ACHN (cell line): ENCODE measurements at regions of chr12 and their contacts with region 1.

Region 1: DNA sequence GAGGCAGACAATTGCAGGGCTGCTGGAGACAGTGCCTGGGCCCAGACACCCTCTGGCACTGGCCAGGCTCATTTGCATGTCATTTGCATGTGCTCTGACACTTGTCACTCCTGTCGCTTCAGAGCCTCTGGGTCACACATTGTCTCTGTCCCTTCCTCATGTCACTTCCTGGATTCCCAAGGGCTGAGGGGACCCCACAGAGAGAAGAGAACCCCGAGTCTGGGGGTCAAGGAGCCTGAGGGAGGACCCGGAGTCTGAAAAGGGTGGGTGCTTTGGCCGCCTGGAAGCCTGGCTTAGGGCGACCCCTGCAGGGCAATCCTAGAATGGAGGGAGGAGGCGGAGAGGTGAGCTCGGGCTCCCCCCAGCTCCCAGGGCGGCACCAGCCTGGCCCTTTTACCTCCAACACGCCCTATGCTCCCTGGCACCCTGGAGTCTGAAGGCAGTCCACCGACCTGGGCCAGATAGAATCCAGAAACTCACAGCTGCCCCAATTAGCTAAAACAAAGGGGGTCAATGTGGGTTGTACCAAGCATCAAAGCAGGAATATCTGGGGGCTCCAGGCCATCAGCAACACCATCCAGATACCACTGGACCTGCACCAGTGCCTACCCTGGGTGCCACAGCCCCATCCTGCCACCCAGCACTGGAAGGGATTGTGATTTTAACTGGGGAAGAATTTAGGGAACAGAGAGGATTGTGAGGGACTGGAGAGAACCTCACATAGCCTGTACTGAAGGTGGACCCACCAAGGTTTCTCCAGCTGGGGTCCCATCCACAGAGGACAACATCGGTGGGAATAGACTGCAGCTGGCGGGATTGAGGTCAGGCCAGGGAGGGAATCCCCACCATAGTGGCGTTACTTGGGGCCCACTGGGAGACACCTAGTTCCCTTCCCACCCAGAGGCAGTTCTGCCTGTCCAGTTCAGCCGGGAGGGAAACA is 21.8 kb upstream of the KRT78 start:
- DNase-seq: peak; percentile 80

Region 2: DNA sequence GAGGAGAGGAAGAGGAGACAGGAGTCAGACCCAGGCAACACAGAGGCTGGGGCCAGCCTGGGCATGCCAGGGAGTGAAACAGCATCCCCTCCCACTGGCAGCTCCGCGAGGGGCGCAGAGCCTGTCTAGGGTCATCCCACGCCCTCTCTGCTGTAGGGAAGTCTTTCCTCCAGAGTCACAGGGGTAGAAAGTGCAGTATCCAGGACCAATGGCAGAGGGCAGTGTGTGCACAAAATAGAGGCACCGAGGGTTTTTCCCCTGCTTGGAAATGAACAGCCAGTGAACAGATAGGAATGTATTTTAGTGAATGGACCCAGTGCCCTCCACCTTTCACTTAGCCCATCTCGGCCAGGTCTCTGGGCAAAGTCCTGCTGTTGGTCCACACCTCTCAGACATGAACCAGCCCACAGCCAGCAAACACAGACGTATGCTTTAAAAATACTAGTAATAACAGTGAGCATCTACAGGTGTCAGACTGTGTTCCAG is 287.6 kb before region 1 on chr12:
- in situ Hi-C with region 1: loop called (anchors 25 kb)
- DNase-seq: peak; percentile 73